Activated naive CD4-positive, alpha-beta T cell treated with anti-CD3 and anti-CD28 coated beads for 36 hours (primary cell): ENCODE measurements at regions of chr5 and their contacts with region 1.

Region 1: DNA sequence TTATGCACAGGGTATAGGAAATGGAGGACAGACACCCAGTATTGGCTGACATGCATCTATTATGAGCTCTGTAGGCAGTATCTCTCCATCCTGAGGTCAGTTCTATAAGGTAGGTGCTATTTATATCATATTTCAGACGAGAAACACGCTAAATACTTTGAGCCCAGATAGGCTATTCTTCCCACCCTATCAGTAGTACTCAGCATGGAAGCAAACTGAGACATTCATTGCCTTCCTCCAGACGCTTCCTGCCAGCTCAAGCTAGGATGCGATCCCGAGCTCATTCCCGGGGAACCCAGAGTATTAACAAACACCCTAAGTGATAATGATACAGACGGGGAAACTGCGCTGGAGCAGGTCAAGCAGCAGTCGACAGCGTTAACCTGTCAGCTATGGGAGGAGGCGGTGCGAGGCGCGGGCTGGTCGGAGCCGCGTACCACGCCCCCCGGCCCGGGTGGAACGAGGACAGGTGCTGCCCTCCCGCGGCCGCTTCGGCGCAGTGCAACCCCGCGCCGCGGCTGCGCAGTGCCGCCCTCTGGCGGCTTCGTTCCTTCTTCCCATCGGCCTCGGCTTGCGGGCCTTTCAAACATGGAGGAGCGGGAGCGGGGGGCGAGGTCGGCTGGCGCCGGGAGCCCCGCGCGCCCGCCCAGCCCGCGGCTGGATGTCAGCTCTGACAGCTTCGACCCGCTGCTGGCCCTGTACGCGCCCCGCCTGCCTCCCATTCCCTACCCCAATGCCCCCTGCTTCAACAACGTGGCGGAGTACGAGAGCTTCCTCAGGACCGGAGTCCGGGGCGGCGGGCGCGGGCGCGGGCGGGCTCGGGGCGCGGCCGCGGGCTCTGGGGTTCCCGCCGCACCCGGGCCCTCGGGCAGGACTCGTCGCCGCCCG is at the start of gene LSM11:
- DNase-seq: peak; percentile 89
- H3K4me3 Mint-ChIP-seq: peak within 1 kb of the TSS; percentile 92
- H3K27ac Mint-ChIP-seq: peak within 1 kb of the TSS; percentile 71
- H3K4me1 Mint-ChIP-seq: peaks cover 32% of the 10 kb centered on the region
- H3K27me3 Mint-ChIP-seq: no peaks in the 10 kb centered on the region
- total RNA-seq, gene LSM11: 8.2 to 8.8 TPM

Region 2: DNA sequence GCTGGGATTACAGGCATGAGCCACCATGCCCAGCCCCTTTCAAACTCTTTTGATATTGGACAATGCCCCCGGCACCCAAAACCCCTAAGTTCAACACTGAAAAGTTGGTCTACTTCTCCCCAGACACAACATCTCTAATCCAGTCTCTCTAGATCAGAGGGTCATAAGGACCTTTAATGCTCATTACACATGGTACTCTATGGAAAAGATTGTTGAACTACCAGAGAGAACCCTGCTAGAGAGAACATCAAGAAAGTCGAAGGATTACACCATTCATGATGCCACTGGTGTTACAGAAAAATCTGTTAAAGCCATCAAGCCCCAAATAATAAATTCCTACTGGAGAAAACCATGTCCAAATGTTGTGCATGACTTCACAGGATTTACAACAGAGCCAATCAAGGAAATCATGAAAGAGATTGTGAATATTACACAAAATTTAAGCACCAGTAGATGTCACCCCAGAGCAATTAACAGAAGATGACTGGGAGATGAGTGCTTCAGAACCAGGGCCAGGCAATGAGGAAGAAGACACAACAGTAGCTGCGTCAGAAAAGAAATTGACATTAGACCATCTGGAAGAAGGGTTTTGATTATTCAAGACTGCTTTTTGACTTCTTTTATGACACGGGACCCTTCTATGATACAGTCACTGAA is 311.7 kb before region 1 on chr5:
- CTCF ChIA-PET with region 1: interaction called, 27 read pairs
- intact Hi-C with region 1: loop called (anchors 1 kb)
- DNase-seq: peak; percentile 41
- H3K4me3 Mint-ChIP-seq: no peak overlapping the region
- H3K27ac Mint-ChIP-seq: no peak overlapping the region
- H3K4me1 Mint-ChIP-seq: peaks cover 3% of the 10 kb centered on the region
- H3K27me3 Mint-ChIP-seq: peaks cover 9% of the 10 kb centered on the region

Region 3: DNA sequence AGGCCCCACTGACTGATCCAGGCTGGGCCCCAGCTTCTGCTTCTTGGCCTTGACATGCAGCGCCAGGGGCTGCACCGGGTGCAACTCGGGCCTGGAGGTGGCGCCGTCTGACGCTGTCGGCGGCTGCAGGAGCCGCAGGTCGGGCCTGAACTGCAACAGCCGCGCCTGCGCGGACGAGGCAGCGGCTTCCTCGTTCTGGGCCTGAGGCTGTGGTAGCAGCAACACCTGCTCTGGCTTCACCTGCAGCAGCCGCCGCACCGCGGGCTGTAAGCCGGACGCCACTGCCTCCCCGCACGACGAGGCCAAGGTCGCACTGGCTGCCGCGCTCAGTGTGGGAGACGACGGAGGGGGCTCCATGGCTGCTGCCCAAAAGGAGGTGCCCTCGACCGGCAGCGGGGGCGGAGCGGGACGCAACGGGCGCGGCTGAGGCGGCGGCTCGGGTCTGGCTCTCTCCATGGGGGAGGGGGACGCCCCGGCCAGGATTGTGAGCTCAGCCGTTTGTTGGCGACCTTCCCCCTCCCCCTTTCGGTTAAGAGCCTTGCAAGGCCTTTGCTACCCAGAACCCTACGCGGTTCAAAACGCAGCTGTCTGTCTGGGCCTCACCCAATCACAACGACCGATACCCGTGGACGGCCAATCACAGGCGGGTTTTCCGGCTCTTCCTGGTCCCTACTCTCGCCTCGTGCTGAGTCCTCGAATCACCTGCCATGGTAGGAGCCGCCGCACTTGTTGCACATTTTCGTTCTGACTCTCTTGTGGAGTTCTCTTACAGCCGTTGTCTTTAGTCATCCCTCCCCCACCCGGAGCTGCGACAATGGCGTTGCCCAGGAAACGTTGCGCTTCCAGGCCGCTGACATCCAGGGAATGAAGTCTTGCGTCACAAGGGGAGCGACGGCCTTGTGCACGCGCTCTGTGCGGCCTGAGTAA is 91.5 kb before region 1 on chr5 and contains the start of gene SOX30:
- CTCF ChIA-PET with region 1: interaction called, 17 read pairs
- intact Hi-C with region 1: loop called (anchors 1 kb)
- DNase-seq: peak; percentile 87
- H3K4me3 Mint-ChIP-seq: peak within 1 kb of the TSS; percentile 71
- H3K27ac Mint-ChIP-seq: peak within 1 kb of the TSS; percentile 78
- H3K4me1 Mint-ChIP-seq: peaks cover 12% of the 10 kb centered on the region
- H3K27me3 Mint-ChIP-seq: peaks cover 2% of the 10 kb centered on the region
- total RNA-seq, gene SOX30: 0.36 to 0.57 TPM

Region 4: DNA sequence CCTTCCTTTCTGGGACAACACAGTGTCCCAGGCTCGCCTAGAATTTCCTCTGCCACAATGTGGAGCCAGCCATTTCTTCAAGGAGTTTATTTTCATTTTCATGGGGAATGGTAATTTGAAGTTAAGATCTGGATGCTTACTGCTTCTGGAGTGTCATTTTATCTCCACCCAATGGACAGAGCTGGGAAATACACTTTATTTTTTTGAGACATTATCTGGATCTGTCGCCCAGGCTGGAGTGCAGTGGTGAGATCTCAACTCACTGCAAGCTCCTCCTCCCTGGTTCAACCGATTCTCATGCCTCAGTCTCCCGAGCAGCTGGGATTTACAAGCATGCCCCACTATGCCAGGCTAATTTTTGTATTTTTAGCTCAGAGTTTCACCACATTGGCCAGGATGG is 24.9 kb before region 1 on chr5:
- CTCF ChIA-PET with region 1: interaction called, 18 read pairs
- intact Hi-C with region 1: loop called (anchors 1 kb)
- DNase-seq: no peak
- H3K4me3 Mint-ChIP-seq: no peak overlapping the region
- H3K27ac Mint-ChIP-seq: no peak overlapping the region
- H3K4me1 Mint-ChIP-seq: peaks cover 25% of the 10 kb centered on the region
- H3K27me3 Mint-ChIP-seq: no peaks in the 10 kb centered on the region

Region 5: DNA sequence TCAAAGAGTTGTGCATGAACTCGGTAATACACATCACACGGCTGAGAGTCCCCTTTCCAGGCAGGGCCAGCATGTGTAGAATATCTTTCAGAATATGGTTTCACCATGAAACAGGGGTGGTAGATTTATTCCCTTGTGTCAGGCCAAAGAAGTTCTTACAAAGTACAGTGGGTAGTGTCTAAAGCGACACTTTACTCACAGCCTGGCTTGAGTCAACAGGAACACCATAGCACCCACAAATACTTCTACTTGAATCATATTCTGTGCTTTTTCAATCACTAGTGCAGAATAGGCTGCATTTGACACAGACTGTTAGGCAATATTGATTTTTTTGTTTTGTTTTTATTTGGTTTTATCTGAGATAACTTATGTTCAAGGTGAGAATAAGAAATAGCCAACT is 12.7 kb after region 1 on chr5:
- CTCF ChIA-PET with region 1: interaction called, 26 read pairs
- intact Hi-C with region 1: no loop called
- DNase-seq: no peak
- H3K4me3 Mint-ChIP-seq: no peak overlapping the region
- H3K27ac Mint-ChIP-seq: no peak overlapping the region
- H3K4me1 Mint-ChIP-seq: peaks cover 7% of the 10 kb centered on the region
- H3K27me3 Mint-ChIP-seq: no peaks in the 10 kb centered on the region